Upper lobe of right lung (tissue), 1 donor: ENCODE measurements at regions of chr19 and their contacts with region 1.

Region 1: GRCh38 chr19:18469069-18469846 is 31.3 kb upstream of the ISYNA1 start:
- DNase-seq: peak; percentile 82
- ATAC-seq: peak; percentile 68
- H3K4me3 ChIP-seq: no peak overlapping the region
- H3K27ac ChIP-seq: no peak overlapping the region
- H3K4me1 ChIP-seq: peaks cover 47% of the 10 kb centered on the region
- H3K27me3 ChIP-seq: no peaks in the 10 kb centered on the region
- CTCF ChIP-seq: peak; percentile 83

Region 2: GRCh38 chr19:18529782-18530181 is 60.5 kb after region 1 on chr19:
- intact Hi-C with region 1: no loop called
- DNase-seq: no peak
- ATAC-seq: peak; percentile 15
- H3K4me3 ChIP-seq: no peak overlapping the region
- H3K27ac ChIP-seq: no peak overlapping the region
- H3K4me1 ChIP-seq: no peaks in the 10 kb centered on the region
- H3K27me3 ChIP-seq: no peaks in the 10 kb centered on the region
- CTCF ChIP-seq: no peak

Region 3: GRCh38 chr19:18562086-18562485 is 92.8 kb after region 1 on chr19:
- intact Hi-C with region 1: loop called (anchors 10 kb)
- DNase-seq: no peak
- ATAC-seq: no peak
- H3K4me3 ChIP-seq: no peak overlapping the region
- H3K27ac ChIP-seq: peak overlapping the region; percentile 63
- H3K4me1 ChIP-seq: peaks cover 5% of the 10 kb centered on the region
- H3K27me3 ChIP-seq: no peaks in the 10 kb centered on the region
- CTCF ChIP-seq: no peak